B cell (primary cell): ENCODE measurements at regions of chr6 and their contacts with region 1.

Region 1: GRCh38 chr6:31462964-31463870 is 34.7 kb upstream of the MICB start:
- DNase-seq: peak; percentile 97
- ATAC-seq: peak; percentile 96
- H3K4me3 ChIP-seq: peak overlapping the region; percentile 73 to 99 (median 84)
- H3K4me3 Mint-ChIP-seq: peak overlapping the region; percentile 99
- H3K27ac ChIP-seq: peak overlapping the region; percentile 99
- H3K27ac Mint-ChIP-seq: peak overlapping the region; percentile 98
- H3K4me1 ChIP-seq: peaks cover 51 to 55% of the 10 kb centered on the region in 2 donors
- H3K4me1 Mint-ChIP-seq: peaks cover 66% of the 10 kb centered on the region
- H3K27me3 ChIP-seq: peaks cover 0 to 4% (median 0%) of the 10 kb centered on the region in 4 experiments
- H3K27me3 Mint-ChIP-seq: no peaks in the 10 kb centered on the region
- CTCF ChIP-seq: no peak

Region 2: DNA sequence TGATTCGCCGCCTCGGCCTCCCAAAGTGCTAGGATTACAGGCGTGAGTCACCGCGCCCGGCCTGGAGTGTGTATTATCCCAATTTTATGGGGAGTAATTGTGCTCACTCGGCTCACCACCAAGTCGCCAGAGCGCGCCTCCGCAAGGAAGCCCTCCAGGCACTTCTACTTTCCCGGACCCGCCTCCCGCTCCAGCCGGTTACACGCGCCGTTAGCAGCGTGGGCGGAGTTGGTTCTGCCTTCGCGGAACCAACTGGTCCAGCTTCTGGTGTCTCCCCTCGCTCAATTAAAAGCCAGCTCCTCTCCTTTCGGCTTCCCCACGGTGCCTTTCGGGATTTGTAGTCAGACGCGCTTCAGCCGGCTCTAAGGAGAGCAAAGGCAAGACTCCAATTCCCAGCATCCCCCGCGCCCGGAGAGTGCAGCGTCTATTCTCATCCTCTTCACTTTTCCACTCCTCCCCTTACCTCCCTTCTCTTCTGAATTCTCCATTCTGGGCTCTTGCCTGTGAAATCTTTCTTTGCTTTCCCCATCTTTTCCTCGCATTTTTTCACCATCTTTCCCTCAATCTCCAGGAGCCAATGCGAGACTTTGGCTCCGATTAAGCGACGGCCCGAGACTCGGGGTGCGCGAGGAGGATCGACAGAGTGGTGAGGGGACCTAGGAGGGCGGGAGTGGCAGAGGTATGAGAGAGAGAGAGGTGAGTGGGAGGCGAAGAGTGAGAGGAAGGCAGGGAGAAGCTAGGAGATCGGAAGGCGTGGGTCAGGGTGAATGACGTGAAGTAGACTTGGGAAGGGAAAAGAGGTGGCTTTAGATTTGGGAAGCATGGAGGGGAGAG is 555.2 kb before region 1 on chr6 and contains the start of gene GTF2H4:
- CTCF ChIA-PET with region 1: no interaction called
- POLR2A ChIA-PET with region 1: interaction called, 12 read pairs
- intact Hi-C with region 1: no loop called
- DNase-seq: peak; percentile 95
- ATAC-seq: peak; percentile 97
- H3K4me3 ChIP-seq: peak within 1 kb of the TSS; percentile 71 to 99 (median 89)
- H3K4me3 Mint-ChIP-seq: peak within 1 kb of the TSS; percentile 100
- H3K27ac ChIP-seq: peak within 1 kb of the TSS in 1 of 2 donors; percentile 43
- H3K27ac Mint-ChIP-seq: peak within 1 kb of the TSS; percentile 88
- H3K4me1 ChIP-seq: peaks cover 14 to 28% of the 10 kb centered on the region in 2 donors
- H3K4me1 Mint-ChIP-seq: peaks cover 21% of the 10 kb centered on the region
- H3K27me3 ChIP-seq: no peaks in the 10 kb centered on the region
- H3K27me3 Mint-ChIP-seq: no peaks in the 10 kb centered on the region
- CTCF ChIP-seq: no peak
- total RNA-seq, gene GTF2H4: 38.4 and 44.7 TPM in 2 replicates